CD4-positive, alpha-beta T cell (primary cell): ENCODE measurements at regions of chr15 and their contacts with region 1.

Region 1: GRCh38 chr15:74438721-74439316 is 5.1 kb upstream of the SEMA7A start:
- DNase-seq: peak; percentile 59 to 86 (median 69)
- ATAC-seq: peak; percentile 84
- H3K4me3 ChIP-seq: no peak overlapping the region
- H3K4me3 Mint-ChIP-seq: peak overlapping the region; percentile 38
- H3K27ac ChIP-seq: no peak overlapping the region
- H3K27ac Mint-ChIP-seq: no peak overlapping the region
- H3K4me1 ChIP-seq: peaks cover 13% of the 10 kb centered on the region
- H3K4me1 Mint-ChIP-seq: peaks cover 16% of the 10 kb centered on the region
- H3K27me3 ChIP-seq: no peaks in the 10 kb centered on the region
- H3K27me3 Mint-ChIP-seq: no peaks in the 10 kb centered on the region
- CTCF ChIP-seq: peak; percentile 82

Region 2: DNA sequence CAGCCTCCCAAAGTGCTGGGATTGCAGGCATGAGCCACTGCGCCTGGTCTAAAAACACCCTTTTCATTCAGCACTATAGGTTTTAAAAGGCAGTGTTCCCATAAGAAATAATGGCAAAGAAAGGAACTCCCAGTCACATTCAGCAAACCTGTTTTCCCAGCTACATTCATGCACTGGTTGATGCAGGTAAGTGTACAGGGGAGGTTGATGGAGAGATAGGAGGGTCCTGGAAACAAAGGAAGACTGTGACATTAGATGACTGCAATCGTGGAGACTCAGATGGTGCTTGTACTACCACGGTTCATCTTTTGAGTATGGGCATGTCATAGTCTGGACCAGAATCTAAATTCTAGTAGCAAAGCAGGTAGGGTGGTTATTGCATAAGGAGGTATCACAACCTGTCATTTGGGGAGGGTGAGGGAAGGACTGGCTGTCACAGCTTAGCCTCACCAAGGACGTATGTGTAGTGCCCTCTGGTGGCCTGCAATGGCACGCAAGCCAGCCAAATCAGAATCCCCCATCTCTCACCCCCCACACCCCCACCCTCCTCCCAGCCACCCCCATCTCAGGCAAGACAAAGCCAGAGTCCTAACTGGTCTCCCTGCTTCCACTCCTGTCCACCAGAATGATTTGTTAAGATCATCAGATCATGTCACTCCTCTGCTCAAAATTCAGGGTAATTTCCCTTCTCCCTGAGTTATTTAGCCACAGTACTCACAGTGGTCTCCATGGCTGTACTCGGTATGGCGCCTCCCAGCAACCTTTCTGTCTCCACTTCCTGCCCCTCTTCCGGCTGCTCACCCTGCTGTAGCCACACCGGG is 50.9 kb after region 1 on chr15:
- CTCF ChIA-PET with region 1: no interaction called
- POLR2A ChIA-PET with region 1: no interaction called
- intact Hi-C with region 1: loop called in 1 of 2 experiments (anchors 5 kb)
- DNase-seq: peak; percentile 46 to 83 (median 61)
- ATAC-seq: peak; percentile 96
- H3K4me3 ChIP-seq: no peak overlapping the region
- H3K4me3 Mint-ChIP-seq: no peak overlapping the region
- H3K27ac ChIP-seq: no peak overlapping the region
- H3K27ac Mint-ChIP-seq: no peak overlapping the region
- H3K4me1 ChIP-seq: peaks cover 4% of the 10 kb centered on the region
- H3K4me1 Mint-ChIP-seq: peaks cover 11% of the 10 kb centered on the region
- H3K27me3 ChIP-seq: no peaks in the 10 kb centered on the region
- H3K27me3 Mint-ChIP-seq: no peaks in the 10 kb centered on the region
- CTCF ChIP-seq: peak; percentile 69